A673 (cell line): ENCODE measurements at regions of chr12 and their contacts with region 1.

Region 1: DNA sequence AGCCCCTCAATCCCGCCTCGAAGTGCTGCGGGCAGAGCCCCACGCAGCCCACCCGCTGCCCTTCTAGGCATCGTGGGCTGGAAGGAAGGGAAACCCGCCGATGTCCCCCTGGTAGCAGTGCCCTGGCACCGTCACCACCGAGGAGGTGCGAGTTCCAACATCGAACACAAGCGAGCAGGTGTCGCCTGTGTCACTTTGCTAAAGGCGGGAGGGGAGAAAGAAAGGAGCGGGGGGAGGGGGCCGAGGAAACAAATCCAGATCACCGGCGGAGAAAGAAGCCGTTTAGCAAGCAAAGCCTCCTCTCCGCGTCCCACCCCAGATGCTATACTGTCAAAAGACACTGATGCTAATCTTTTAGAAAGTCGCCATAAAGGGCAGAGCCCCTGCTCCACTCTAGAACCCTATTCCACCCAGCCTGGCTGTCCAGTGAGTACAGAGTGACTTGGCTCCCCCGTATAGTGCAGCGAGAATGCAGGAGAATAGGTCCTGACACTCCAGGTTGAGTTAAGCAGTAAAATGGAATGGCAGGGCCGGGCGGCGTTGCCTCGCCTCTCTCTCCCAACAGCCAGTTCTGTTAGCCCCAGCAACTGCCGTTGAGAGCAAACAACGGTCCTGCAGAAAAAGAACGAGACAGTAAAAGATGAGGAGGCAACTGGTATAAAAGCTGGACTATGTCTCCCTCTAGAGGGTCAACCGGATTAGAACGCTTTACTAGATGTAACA is 67.9 kb upstream of the USP15 start:
- DNase-seq: peak; percentile 90
- H3K4me3 ChIP-seq: peak overlapping the region; percentile 56
- H3K27ac ChIP-seq: no peak overlapping the region
- H3K4me1 ChIP-seq: no peaks in the 10 kb centered on the region
- H3K27me3 ChIP-seq: peaks cover 27% of the 10 kb centered on the region
- CTCF ChIP-seq: peak; percentile 83

Region 2: GRCh38 chr12:60684988-60685655 is 1507.2 kb before region 1 on chr12:
- CTCF ChIA-PET with region 1: interaction called, 3 read pairs
- POLR2A ChIA-PET with region 1: no interaction called
- intact Hi-C with region 1: loop called (anchors 5 kb)
- DNase-seq: peak; percentile 33
- H3K4me3 ChIP-seq: no peak overlapping the region
- H3K27ac ChIP-seq: no peak overlapping the region
- H3K4me1 ChIP-seq: no peaks in the 10 kb centered on the region
- H3K27me3 ChIP-seq: no peaks in the 10 kb centered on the region
- CTCF ChIP-seq: peak; percentile 55

Region 3: DNA sequence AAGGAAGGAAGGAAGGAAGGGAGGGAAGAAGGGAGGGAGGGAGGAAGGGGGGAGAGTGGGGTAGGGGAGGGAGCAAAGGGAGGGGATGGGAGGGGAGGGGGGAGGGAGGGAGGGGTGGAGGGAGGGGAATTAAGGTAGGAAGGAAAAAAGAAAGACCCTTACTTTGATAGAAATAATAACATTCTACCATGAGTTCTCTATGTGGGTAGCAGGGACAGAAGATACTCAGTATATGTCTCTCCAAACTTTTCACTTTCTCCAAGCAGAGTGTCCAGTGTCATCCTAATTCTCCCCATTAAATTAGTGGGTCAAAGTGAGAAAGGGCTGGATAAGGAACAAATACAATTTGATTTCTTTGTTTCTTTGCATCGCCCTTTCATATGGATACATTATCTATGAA is 485.6 kb before region 1 on chr12:
- CTCF ChIA-PET with region 1: no interaction called
- POLR2A ChIA-PET with region 1: no interaction called
- intact Hi-C with region 1: loop called (anchors 5 kb)
- DNase-seq: no peak
- H3K4me3 ChIP-seq: no peak overlapping the region
- H3K27ac ChIP-seq: peak overlapping the region; percentile 94
- H3K4me1 ChIP-seq: peaks cover 48% of the 10 kb centered on the region
- H3K27me3 ChIP-seq: no peaks in the 10 kb centered on the region
- CTCF ChIP-seq: no peak

Region 4: GRCh38 chr12:61993734-61994345 is 198.5 kb before region 1 on chr12:
- CTCF ChIA-PET with region 1: no interaction called
- POLR2A ChIA-PET with region 1: no interaction called
- intact Hi-C with region 1: loop called (anchors 5 kb)
- DNase-seq: peak; percentile 84
- H3K4me3 ChIP-seq: no peak overlapping the region
- H3K27ac ChIP-seq: no peak overlapping the region
- H3K4me1 ChIP-seq: peaks cover 61% of the 10 kb centered on the region
- H3K27me3 ChIP-seq: no peaks in the 10 kb centered on the region
- CTCF ChIP-seq: peak; percentile 78

Region 5: DNA sequence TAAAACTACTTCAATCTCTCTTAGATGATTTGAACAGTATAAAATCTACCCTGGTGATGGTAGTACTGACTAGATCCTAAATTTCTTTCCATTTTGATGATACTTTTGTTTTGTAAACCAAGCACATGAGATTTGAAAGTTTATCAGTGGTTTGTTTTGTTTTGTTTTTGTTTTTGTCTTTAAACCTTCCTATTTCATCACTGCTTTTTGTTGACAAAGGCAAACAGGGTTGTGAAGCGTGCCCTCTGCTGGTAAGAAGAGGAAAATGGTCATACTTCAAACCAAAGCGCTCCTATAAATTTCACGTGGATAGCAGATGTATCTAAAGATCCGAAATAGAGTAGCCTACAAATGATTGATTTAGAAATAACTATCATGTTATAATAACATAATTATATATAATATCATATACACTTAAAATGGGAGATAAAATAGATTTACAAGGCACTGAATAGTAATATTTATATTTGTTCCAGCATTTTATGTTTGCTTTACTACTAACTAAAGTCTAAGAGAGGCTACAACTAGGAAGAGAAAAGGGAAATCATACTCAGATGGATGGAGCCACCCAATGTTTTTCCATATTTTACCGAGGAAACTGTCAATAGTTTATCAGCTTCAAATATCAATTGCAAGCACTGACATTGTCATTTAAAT is 186.1 kb before region 1 on chr12:
- CTCF ChIA-PET with region 1: no interaction called
- POLR2A ChIA-PET with region 1: no interaction called
- intact Hi-C with region 1: loop called (anchors 5 kb)
- DNase-seq: peak; percentile 68
- H3K4me3 ChIP-seq: no peak overlapping the region
- H3K27ac ChIP-seq: peak overlapping the region; percentile 21
- H3K4me1 ChIP-seq: peaks cover 7% of the 10 kb centered on the region
- H3K27me3 ChIP-seq: no peaks in the 10 kb centered on the region
- CTCF ChIP-seq: peak; percentile 80

Region 6: DNA sequence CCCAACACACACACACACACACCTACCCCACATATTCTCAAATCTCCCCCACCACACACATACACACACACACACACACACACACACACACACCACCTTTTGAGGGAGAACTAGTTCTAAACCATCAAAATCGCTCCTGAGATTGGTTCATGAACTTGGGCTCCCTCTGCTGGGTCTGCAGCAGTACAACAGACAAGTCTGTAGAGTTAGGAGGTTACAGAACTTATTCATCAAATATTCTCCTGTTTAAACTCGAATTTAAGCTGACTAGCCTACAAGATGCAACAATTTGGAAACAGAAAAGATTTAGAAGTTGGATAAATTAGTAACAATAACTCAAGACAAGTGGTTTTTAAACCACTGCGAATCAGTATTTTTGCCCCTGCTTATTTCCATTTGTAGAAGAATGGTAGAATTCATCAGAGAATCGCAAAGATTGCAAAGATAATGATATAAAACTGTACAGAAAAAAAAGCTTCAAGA is 68.6 kb before region 1 on chr12:
- CTCF ChIA-PET with region 1: no interaction called
- POLR2A ChIA-PET with region 1: no interaction called
- intact Hi-C with region 1: loop called (anchors 5 kb)
- DNase-seq: peak; percentile 71
- H3K4me3 ChIP-seq: no peak overlapping the region
- H3K27ac ChIP-seq: no peak overlapping the region
- H3K4me1 ChIP-seq: peaks cover 14% of the 10 kb centered on the region
- H3K27me3 ChIP-seq: no peaks in the 10 kb centered on the region
- CTCF ChIP-seq: peak; percentile 84

Region 7: GRCh38 chr12:62268956-62269355 is 76.6 kb after region 1 on chr12:
- CTCF ChIA-PET with region 1: no interaction called
- POLR2A ChIA-PET with region 1: no interaction called
- intact Hi-C with region 1: no loop called
- DNase-seq: no peak
- H3K4me3 ChIP-seq: no peak overlapping the region
- H3K27ac ChIP-seq: no peak overlapping the region
- H3K4me1 ChIP-seq: peaks cover 6% of the 10 kb centered on the region
- H3K27me3 ChIP-seq: no peaks in the 10 kb centered on the region
- CTCF ChIP-seq: no peak